MCF 10A (cell line): ENCODE measurements at regions of chr5 and their contacts with region 1.

Region 1: GRCh38 chr5:137660349-137660817 is 75.5 kb downstream of the KLHL3 start:
- DNase-seq: peak; percentile 85
- H3K4me3 Mint-ChIP-seq: no peak overlapping the region
- H3K27ac Mint-ChIP-seq: no peak overlapping the region
- H3K4me1 Mint-ChIP-seq: no peaks in the 10 kb centered on the region
- H3K27me3 Mint-ChIP-seq: peaks cover 10% of the 10 kb centered on the region
- CTCF ChIP-seq: peak; percentile 80

Region 2: GRCh38 chr5:137357436-137357835 is 302.9 kb before region 1 on chr5:
- CTCF ChIA-PET with region 1: no interaction called
- POLR2A ChIA-PET with region 1: no interaction called
- intact Hi-C with region 1: no loop called
- DNase-seq: no peak
- H3K4me3 Mint-ChIP-seq: no peak overlapping the region
- H3K27ac Mint-ChIP-seq: no peak overlapping the region
- H3K4me1 Mint-ChIP-seq: no peaks in the 10 kb centered on the region
- H3K27me3 Mint-ChIP-seq: no peaks in the 10 kb centered on the region
- CTCF ChIP-seq: no peak

Region 3: DNA sequence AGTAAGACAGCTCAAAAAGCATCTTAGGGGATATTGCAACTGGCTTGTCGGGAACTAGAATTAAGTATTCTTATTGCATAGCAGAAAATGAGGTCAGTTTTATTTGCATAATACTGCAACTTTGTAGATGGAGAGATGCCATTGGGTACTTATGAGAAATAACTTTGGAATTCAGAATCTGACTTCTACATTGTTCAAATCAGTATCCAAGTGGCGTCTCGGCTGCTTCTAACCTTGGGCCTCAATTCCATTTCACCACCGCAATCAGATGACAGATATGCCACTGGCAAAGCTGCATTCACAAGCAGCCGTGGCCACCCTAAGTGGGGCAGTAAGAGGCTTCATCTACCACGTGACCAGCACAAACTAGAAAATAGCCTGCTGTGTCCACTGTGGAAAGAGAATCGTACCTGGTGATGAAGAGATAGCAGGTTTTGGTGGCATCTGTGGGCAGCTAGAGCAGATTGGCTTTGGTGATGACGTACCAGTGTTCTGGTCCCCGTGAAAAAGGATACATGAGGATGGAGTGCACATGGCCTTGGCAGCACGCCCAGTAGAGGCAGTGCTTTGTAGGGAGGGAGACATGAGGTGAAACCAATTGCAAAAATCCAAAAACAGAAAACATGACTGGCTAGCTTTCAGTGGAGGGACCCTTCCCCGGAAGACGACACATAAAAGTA is 41.1 kb before region 1 on chr5:
- CTCF ChIA-PET with region 1: interaction called, 42 read pairs
- POLR2A ChIA-PET with region 1: no interaction called
- intact Hi-C with region 1: no loop called
- DNase-seq: peak; percentile 79
- H3K4me3 Mint-ChIP-seq: no peak overlapping the region
- H3K27ac Mint-ChIP-seq: peak overlapping the region; percentile 46
- H3K4me1 Mint-ChIP-seq: peaks cover 41% of the 10 kb centered on the region
- H3K27me3 Mint-ChIP-seq: no peaks in the 10 kb centered on the region
- CTCF ChIP-seq: no peak

Region 4: GRCh38 chr5:137641148-137641547 is 19.2 kb before region 1 on chr5:
- CTCF ChIA-PET with region 1: interaction called, 79 read pairs
- POLR2A ChIA-PET with region 1: interaction called, 4 read pairs
- intact Hi-C with region 1: no loop called
- DNase-seq: peak; percentile 49
- H3K4me3 Mint-ChIP-seq: no peak overlapping the region
- H3K27ac Mint-ChIP-seq: no peak overlapping the region
- H3K4me1 Mint-ChIP-seq: no peaks in the 10 kb centered on the region
- H3K27me3 Mint-ChIP-seq: no peaks in the 10 kb centered on the region
- CTCF ChIP-seq: no peak

Region 5: DNA sequence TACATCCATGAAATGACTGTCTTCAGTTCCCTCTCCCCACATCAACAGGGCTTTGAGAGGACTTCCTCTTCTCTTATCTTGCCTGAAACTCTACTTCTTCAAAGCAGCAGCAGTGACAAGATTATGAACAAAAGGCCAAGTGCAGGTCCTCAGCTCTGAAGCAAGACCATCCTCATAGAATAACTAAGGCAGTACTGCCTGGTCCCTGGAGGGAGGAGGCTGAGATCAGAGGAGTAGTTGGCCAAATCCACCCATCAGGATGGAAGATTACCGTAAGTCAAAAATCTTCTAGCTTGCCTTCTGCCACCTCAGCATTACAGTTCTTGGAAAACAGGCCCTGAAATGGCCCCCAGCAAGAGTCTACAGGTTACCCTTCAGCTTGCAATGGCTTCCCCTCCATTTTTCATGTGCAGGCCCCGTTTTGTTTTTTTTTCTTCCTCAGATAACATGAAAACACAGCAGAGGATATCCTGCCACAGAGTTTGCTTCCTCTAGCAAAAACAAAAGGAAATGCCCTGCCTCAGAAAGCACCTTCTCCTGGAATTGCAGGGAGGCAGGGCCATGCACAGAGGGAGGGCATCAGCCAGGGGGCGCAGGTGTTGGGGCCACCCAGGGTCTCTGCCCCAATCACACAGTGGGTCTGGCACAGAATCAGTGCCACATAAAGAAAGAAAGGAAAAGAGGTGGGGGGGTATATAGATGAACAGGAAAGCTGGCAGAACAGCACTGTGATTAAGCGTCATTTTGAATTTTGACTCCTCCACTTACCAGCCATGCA is 35.5 kb after region 1 on chr5:
- CTCF ChIA-PET with region 1: interaction called, 17 read pairs
- POLR2A ChIA-PET with region 1: interaction called, 3 read pairs
- intact Hi-C with region 1: no loop called
- DNase-seq: no peak
- H3K4me3 Mint-ChIP-seq: no peak overlapping the region
- H3K27ac Mint-ChIP-seq: no peak overlapping the region
- H3K4me1 Mint-ChIP-seq: no peaks in the 10 kb centered on the region
- H3K27me3 Mint-ChIP-seq: peaks cover 11% of the 10 kb centered on the region
- CTCF ChIP-seq: no peak

Region 6: GRCh38 chr5:137728048-137728447 is 67.7 kb after region 1 on chr5:
- CTCF ChIA-PET with region 1: interaction called, 21 read pairs
- POLR2A ChIA-PET with region 1: interaction called, 4 read pairs
- intact Hi-C with region 1: no loop called
- DNase-seq: no peak
- H3K4me3 Mint-ChIP-seq: no peak overlapping the region
- H3K27ac Mint-ChIP-seq: no peak overlapping the region
- H3K4me1 Mint-ChIP-seq: peaks cover 4% of the 10 kb centered on the region
- H3K27me3 Mint-ChIP-seq: no peaks in the 10 kb centered on the region
- CTCF ChIP-seq: no peak

Region 7: DNA sequence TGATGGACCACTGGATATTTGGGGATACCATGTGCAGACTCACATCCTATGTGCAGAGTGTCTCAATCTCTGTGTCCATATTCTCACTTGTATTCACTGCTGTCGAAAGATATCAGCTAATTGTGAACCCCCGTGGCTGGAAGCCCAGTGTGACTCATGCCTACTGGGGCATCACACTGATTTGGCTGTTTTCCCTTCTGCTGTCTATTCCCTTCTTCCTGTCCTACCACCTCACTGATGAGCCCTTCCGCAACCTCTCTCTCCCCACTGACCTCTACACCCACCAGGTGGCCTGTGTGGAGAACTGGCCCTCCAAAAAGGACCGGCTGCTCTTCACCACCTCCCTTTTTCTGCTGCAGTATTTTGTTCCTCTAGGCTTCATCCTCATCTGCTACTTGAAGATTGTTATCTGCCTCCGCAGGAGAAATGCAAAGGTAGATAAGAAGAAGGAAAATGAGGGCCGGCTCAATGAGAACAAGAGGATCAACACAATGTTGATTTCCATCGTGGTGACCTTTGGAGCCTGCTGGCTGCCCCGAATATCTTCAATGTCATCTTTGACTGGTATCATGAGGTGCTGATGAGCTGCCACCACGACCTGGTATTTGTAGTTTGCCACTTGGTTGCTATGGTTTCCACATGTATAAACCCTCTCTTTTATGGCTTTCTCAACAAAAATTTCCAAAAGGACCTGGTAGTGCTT is 148.3 kb after region 1 on chr5:
- CTCF ChIA-PET with region 1: no interaction called
- POLR2A ChIA-PET with region 1: no interaction called
- intact Hi-C with region 1: no loop called
- DNase-seq: peak; percentile 65
- H3K4me3 Mint-ChIP-seq: no peak overlapping the region
- H3K27ac Mint-ChIP-seq: no peak overlapping the region
- H3K4me1 Mint-ChIP-seq: no peaks in the 10 kb centered on the region
- H3K27me3 Mint-ChIP-seq: peaks cover 17% of the 10 kb centered on the region
- CTCF ChIP-seq: no peak

Region 8: GRCh38 chr5:138128334-138128733 is 468.0 kb after region 1 on chr5:
- CTCF ChIA-PET with region 1: interaction called, 5 read pairs
- POLR2A ChIA-PET with region 1: interaction called, 4 read pairs
- intact Hi-C with region 1: loop called (anchors 1 kb)
- DNase-seq: no peak
- H3K4me3 Mint-ChIP-seq: no peak overlapping the region
- H3K27ac Mint-ChIP-seq: no peak overlapping the region
- H3K4me1 Mint-ChIP-seq: peaks cover under 1% of the 10 kb centered on the region
- H3K27me3 Mint-ChIP-seq: peaks cover 24% of the 10 kb centered on the region
- CTCF ChIP-seq: no peak